Left cardiac atrium (tissue), 4 donors: ENCODE measurements at regions of chr1 and their contacts with region 1.

Region 1: DNA sequence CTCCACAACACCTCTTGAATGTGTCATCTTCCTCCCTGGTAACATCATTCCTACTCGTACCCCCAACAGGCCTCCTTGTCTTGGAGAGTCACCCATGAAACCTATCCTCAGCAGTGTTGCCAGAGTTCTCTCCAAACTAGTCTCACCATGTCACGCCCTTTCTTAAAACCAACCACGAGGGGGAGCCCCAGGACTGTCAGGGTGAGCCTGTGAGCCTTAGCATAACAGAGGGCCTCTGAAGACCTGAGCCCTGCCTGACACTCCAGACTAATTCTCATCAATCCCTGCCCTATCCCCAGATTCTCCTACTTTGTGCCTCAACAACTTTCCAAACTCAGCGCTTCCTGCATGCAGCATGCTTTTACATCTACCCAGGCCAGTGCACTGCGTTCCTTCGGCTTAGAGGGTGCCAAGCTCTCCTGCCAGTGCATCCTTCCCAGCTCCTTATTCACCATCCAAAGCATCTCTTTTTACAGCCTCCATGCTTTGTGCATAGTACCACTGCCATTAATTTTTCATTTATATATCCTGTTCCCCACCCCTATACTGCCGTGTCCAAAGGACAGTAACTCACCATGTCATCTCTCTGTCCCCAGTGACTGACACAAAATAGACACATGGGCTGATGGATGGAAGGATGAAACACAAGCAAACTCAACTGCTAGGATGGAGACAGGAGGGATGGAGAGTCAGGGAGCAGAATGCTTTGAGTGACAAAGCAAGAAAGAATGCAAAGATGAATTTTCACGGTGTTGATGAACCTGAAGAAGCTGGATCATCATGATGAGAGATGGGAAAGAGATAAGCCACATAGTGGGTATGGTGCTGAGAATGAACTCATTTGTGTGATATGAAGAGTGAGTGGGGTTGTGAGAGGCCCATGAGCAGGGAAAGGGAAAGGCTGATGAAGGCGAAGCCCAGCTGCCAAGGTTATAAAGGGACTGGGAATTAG is 34.0 kb downstream of the ZNF697 start:
- DNase-seq: peak; percentile 85
- ATAC-seq: peak; percentile 91 to 94

Region 2: GRCh38 chr1:118753976-118754375 is 860.1 kb before region 1 on chr1:
- intact Hi-C with region 1: no loop called
- DNase-seq: no peak
- ATAC-seq: no peak

Region 3: DNA sequence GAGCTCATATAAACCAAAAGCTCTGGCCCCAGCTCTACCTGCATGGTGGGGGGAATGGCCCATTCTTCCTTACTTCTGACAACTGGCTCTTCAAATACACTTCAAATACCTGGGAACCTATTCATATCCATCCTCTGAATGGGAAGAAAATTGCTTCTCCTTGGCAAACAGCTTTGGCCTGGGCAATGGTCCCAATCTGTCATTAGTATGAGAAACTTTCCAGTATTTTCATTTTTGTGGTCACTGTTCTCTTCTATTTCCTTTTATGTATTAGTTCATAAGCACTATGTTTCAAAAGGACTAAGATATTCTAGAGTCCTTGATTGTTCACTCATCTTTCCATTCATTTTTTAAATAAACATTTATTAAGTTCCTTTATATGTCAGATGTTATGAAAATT is 204.3 kb before region 1 on chr1:
- intact Hi-C with region 1: no loop called
- DNase-seq: no peak
- ATAC-seq: no peak

Region 4: DNA sequence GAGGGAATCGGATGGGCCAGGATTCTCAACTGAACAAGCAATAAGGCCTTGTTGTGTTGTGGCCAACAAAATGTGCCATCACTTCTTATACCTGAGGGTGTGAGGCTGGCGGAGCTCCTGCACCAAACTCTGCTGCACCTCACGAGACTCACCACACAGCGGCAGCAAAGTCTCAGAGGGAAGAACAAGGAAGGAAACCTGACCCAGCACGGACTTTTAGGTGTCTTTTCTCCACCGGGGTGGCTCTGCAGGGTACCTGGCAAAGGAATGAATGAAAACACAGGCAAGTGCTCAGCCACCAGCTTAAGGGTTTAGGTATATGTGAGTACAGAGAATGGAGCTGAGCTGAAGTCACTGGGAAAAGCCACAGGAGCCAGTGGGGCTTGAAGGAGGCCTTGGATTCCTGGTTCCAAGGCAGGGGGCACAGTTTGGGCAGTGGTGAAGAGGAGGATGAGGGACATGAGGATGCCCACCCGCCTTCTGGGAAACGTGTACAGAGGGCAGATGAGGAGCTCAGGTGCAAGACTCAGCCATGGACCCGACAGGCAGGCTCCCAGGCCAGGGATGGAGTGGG is 138.1 kb before region 1 on chr1:
- intact Hi-C with region 1: no loop called
- DNase-seq: peak; percentile 31
- ATAC-seq: peak; percentile 61 to 77

Region 5: DNA sequence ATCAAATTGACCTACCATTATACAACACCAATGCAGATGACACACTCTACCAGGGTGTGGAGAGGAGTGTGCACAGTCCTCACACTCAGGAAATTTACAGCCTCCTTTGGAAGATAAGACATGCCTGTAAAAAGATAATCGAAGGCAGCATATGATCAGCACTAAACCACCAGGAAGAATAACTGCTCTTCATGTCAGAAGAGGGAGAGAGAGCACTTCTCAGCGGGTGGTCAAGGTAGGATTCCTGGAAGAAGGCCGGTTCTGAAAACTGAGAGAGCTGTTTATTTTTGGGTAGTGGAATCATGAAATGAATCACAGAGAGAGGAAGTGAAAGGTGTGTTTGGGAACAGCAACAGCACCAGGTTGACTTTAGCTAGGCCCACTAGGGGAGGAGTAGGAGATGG is 48.0 kb after region 1 on chr1:
- intact Hi-C with region 1: loop called (anchors 1 to 5 kb)
- DNase-seq: no peak
- ATAC-seq: no peak

Region 6: GRCh38 chr1:119675349-119676345 is 61.6 kb after region 1 on chr1:
- intact Hi-C with region 1: loop called in 1 of 2 experiments (anchors 5 kb)
- DNase-seq: peak; percentile 84
- ATAC-seq: peak; percentile 74 to 87